ENCODE measurements at regions of chr5 and their contacts with region 1.

Region 1: GRCh38 chr5:175718401-175719108 is 60.7 kb downstream of the HRH2 start:
- DNase-seq: peak; percentile 70
- ATAC-seq: 0 out of 2 replicates have a peak, but pooled peaks have one; percentile 34
- H3K4me3 Mint-ChIP-seq: no peak overlapping the region
- H3K27ac Mint-ChIP-seq: no peak overlapping the region
- H3K4me1 Mint-ChIP-seq: peaks cover 9% of the 10 kb centered on the region
- H3K27me3 Mint-ChIP-seq: peaks cover 3% of the 10 kb centered on the region; the same call in 1 of the 2 replicates
- CTCF ChIP-seq: peak; percentile 72

Region 2: DNA sequence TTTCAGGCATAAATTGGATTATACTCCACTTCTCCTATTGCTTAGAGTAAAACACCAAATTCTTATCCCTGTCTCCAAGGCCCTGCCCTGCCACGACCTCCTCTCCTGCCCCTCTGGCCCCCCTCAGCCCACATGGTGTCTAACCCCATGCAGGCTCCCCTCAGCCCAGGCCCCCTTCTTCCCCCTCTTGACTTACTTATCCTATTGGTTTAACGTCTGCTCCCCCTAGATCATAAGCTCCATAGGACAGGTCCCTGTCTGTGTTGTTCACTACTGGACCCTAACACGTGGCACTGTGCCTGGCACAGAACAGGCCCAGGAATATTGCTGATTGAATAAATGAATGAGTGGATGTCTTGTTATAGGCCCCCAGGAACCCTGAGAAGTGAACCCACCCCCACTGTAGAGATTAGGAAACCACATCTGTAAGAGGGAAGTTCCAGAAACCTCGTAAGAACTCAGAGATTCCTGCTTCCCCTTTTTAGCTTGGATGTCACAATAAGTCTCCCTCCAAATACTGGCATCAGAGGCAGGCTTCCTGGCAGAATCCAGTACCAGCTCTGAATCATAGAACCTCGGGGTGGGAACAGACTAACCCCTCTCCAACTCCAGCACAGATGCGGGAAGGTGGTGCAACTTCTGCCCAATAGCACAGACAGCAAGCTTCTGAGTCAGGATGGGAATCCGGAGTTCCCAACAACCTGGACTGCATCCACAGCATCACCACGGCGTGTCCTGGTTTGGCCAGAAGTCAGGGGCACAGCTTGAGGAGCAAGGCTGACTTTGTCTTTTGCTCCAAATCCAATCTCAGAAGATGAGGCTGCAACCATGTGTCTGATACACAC is 29.2 kb before region 1 on chr5:
- CTCF ChIA-PET with region 1: interaction called, 21 read pairs
- POLR2A ChIA-PET with region 1: no interaction called
- DNase-seq: no peak
- ATAC-seq: no peak
- H3K4me3 Mint-ChIP-seq: no peak overlapping the region
- H3K27ac Mint-ChIP-seq: no peak overlapping the region
- H3K4me1 Mint-ChIP-seq: peaks cover 21% of the 10 kb centered on the region
- H3K27me3 Mint-ChIP-seq: no peaks in the 10 kb centered on the region
- CTCF ChIP-seq: no peak

Region 3: DNA sequence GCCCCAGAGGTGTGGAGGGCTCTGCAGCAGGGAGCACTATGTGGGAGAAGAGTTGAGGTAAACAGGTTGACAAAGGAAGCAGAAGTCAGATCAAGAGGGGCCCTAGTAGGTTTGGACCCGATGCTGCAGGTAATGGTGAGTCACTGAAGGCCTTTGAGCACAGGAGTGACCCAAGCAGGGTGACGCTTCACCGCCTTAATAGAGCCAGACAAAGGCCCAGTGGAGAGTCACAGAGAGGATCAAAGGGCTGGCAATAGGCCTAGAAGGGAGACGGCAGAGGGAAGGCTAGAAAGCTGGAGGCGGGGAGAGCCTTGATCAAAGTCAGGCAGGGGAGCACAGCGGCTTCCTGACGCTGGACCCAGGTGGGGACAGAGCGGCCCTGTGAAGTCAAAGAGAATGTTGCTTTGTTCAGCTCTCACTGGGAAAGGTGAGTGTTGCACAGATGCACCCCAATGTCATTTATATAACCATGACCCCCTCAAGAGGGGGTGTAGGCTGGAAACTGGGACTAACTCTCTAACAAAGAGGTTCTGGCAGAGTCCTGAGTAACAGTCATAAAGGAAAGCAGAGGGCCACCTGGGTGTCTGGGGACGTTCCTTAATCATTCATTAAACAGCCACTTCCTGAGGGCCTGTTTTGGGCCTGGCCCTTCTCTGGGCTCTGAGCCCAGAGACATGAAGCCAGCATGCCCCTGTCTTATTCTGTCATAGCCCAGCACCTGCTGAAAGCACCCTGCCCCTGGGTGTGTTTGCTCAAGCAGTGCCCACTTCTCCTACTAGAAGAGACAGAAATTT is 143.0 kb after region 1 on chr5:
- CTCF ChIA-PET with region 1: no interaction called
- POLR2A ChIA-PET with region 1: no interaction called
- DNase-seq: no peak
- ATAC-seq: peak; percentile 35
- H3K4me3 Mint-ChIP-seq: no peak overlapping the region
- H3K27ac Mint-ChIP-seq: no peak overlapping the region
- H3K4me1 Mint-ChIP-seq: peaks cover 20% of the 10 kb centered on the region
- H3K27me3 Mint-ChIP-seq: no peaks in the 10 kb centered on the region; the same call in 1 of the 2 replicates
- CTCF ChIP-seq: no peak

Measured in WTC11 (cell line).